Mammary epithelial cell (primary cell): ENCODE measurements at regions of chr7 and their contacts with region 1.

Region 1: GRCh38 chr7:49308787-49309186 is 384.4 kb downstream of the CDC14C start:
- DNase-seq: no peak
- H3K4me3 ChIP-seq: no peak overlapping the region
- H3K27ac ChIP-seq: no peak overlapping the region
- H3K4me1 ChIP-seq: no peaks in the 10 kb centered on the region
- H3K27me3 ChIP-seq: no peaks in the 10 kb centered on the region
- CTCF ChIP-seq: no peak

Region 2: DNA sequence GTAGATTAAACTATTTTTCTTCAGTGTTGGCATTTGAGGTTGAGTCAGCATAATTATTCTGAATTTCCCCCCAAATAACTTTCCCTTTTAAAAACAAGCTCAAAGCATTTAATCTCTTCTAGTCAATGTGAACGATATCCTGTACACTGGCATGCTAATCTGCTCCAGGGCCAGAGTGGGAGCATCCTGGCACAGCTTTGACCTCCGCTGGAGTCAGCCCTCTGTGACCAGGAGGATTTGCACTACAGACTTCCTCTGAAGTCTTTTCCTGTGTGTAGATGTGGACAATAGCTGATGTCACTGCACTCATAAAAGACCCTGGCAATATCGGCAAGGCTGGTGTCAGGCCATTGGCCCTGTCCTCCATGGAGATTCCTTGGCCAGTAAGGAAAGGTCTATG is 44.3 kb before region 1 on chr7:
- CTCF ChIA-PET with region 1: no interaction called
- dilution Hi-C with region 1: no loop called
- in situ Hi-C with region 1: no loop called
- intact Hi-C with region 1: no loop called
- DNase-seq: no peak
- H3K4me3 ChIP-seq: no peak overlapping the region
- H3K27ac ChIP-seq: no peak overlapping the region
- H3K4me1 ChIP-seq: no peaks in the 10 kb centered on the region
- H3K27me3 ChIP-seq: peaks cover 2% of the 10 kb centered on the region
- CTCF ChIP-seq: no peak

Region 3: DNA sequence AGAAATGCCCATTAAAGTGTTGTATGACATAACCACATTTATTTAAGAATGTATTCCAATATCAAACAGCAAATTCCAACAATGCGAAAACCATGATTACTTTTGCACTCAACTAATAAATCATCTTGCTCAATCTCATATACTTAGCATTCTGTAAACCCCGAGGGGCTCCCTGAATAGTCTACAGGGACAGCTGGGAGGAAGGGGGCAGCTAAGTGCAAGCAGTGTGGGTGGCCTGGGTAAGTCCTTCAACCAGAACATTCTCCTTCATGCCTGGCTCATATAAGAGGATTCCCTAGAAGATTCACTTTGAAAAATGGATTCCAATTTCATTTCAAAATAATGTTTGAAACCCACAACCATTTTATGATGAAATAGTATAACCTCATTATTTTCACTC is 28.9 kb before region 1 on chr7:
- CTCF ChIA-PET with region 1: no interaction called
- dilution Hi-C with region 1: no loop called
- in situ Hi-C with region 1: no loop called
- intact Hi-C with region 1: loop called (anchors 1 kb)
- DNase-seq: no peak
- H3K4me3 ChIP-seq: no peak overlapping the region
- H3K27ac ChIP-seq: no peak overlapping the region
- H3K4me1 ChIP-seq: no peaks in the 10 kb centered on the region
- H3K27me3 ChIP-seq: peaks cover 2% of the 10 kb centered on the region
- CTCF ChIP-seq: no peak